Activated B cell treated with CpG ODN at 0.5 μM for 24 hours (primary cell): ENCODE measurements at regions of chr18 and their contacts with region 1.

Region 1: GRCh38 chr18:45090526-45091140 is 409.9 kb downstream of the SETBP1 start:
- DNase-seq: no peak
- ATAC-seq: no peak
- H3K4me3 Mint-ChIP-seq: no peak overlapping the region
- H3K27ac Mint-ChIP-seq: no peak overlapping the region
- H3K4me1 Mint-ChIP-seq: peaks cover 3% of the 10 kb centered on the region
- H3K27me3 Mint-ChIP-seq: no peaks in the 10 kb centered on the region
- CTCF ChIP-seq: no peak

Region 2: GRCh38 chr18:44700652-44701051 is 390.0 kb before region 1 on chr18:
- CTCF ChIA-PET with region 1: no interaction called
- POLR2A ChIA-PET with region 1: interaction called, 10 read pairs
- intact Hi-C with region 1: no loop called
- DNase-seq: no peak
- ATAC-seq: peak; percentile 98
- H3K4me3 Mint-ChIP-seq: no peak overlapping the region
- H3K27ac Mint-ChIP-seq: peak overlapping the region; percentile 79
- H3K4me1 Mint-ChIP-seq: peaks cover 74% of the 10 kb centered on the region
- H3K27me3 Mint-ChIP-seq: no peaks in the 10 kb centered on the region
- CTCF ChIP-seq: no peak

Region 3: GRCh38 chr18:45202061-45202460 is 111.4 kb after region 1 on chr18:
- CTCF ChIA-PET with region 1: no interaction called
- POLR2A ChIA-PET with region 1: no interaction called
- intact Hi-C with region 1: no loop called
- DNase-seq: no peak
- ATAC-seq: no peak
- H3K4me3 Mint-ChIP-seq: no peak overlapping the region
- H3K27ac Mint-ChIP-seq: no peak overlapping the region
- H3K4me1 Mint-ChIP-seq: peaks cover 8% of the 10 kb centered on the region
- H3K27me3 Mint-ChIP-seq: no peaks in the 10 kb centered on the region
- CTCF ChIP-seq: no peak